ENCODE measurements at regions of chr5 and their contacts with region 1.

Region 1: DNA sequence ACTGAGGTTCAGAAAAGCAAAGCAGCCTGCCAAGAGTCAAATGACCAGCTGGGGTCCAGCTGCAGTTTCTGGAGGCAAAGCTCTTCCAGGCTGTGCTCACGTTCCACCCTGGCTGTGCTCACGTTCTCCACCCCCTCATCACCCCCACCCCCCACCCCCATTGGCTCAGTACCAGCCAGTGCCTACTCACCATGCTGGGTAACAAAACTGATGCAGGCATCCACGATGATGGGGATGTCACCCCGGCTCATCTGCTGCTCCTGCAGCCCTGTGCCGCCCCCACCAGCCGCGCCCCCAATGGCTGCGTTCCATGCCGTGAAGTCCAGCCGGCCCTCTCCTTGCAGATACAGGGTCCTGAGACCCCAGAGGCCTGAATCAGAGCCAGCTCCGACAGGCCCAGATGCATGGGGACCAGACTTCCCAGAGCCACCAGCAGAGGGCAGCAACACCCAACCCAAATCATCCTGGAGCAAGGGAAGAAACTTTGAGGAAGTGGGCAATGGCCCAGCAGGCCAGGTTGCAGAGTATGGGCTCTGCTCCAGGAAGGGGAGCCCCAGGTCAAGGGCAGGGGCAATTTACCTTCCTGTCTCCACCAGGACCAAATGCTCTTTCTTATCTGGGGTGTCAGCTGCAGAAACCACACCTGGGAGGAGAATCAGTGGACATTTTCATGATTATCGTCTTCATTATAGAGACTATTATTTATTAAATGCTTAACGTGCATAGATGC is 13.7 kb upstream of the FCHSD1 start:
- DNase-seq: peak; percentile 76 to 84
- H3K4me3 ChIP-seq: no peak overlapping the region
- H3K4me3 Mint-ChIP-seq: no peak overlapping the region
- H3K27ac Mint-ChIP-seq: no peak overlapping the region
- H3K4me1 ChIP-seq: no peaks in the 10 kb centered on the region
- H3K4me1 Mint-ChIP-seq: no peaks in the 10 kb centered on the region
- H3K27me3 ChIP-seq: no peaks in the 10 kb centered on the region
- H3K27me3 Mint-ChIP-seq: no peaks in the 10 kb centered on the region
- CTCF ChIP-seq: peak; percentile 85 to 94

Region 2: DNA sequence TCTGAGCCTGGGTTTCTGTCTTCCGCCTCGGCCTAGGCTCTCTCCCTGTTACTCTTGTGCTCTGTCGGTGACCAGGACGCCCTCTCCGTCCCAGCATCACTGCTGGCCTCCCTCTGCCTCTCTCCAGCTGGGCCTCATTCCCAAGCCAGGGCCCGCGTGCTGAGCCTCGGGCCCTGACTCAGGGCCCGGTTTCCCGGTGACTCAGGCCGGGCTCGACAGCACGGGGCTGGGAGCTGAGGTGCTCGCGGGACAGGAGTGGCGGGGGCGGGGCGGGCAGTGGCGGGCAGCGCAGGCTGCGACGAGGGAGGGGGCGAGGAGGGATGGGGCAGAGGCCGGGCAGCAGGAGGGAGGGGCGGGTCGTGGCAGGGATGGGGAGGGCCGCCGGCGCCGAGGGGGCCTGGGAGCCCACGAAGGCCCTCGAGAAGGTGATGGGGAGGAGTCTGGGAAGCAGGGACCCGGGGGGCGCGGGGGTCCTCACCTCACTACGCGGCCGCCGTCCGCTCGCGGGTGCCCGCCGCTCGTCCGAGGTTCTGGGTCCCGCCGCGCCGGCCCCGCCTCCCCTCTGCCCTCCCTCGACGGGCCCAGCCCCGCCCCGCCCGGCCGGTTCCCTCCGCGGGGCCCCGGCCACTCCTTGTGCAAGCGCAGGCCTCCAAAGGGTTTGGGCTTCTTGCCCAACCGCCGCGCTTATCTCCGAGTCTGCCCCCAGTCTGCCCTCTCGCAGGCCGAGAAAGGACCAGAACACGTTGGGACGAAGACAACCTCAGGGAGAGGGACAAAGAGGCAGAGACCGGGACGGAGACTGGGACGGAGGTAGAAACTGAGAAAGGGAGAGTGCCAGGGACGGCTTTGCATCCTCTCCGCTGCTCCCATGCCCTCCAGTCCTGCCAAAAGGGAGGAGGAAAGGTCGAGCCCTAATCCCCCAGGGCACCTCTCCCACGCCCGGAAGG is 17.1 kb after region 1 on chr5 and contains the start of gene ARAP3:
- CTCF ChIA-PET with region 1: interaction called, 6 read pairs
- POLR2A ChIA-PET with region 1: no interaction called
- intact Hi-C with region 1: loop called (anchors 1 kb)
- DNase-seq: peak; percentile 86
- H3K4me3 ChIP-seq: peak within 1 kb of the TSS; percentile 63
- H3K4me3 Mint-ChIP-seq: peak within 1 kb of the TSS; percentile 65
- H3K27ac Mint-ChIP-seq: peak within 1 kb of the TSS; percentile 12
- H3K4me1 ChIP-seq: peaks cover 15% of the 10 kb centered on the region
- H3K4me1 Mint-ChIP-seq: peaks cover 13% of the 10 kb centered on the region
- H3K27me3 ChIP-seq: no peaks in the 10 kb centered on the region
- H3K27me3 Mint-ChIP-seq: no peaks in the 10 kb centered on the region
- CTCF ChIP-seq: no peak
- total RNA-seq, gene ARAP3: 6.3 and 7.5 TPM in 2 replicates

Region 3: GRCh38 chr5:141691867-141692532 is 27.1 kb after region 1 on chr5:
- CTCF ChIA-PET with region 1: interaction called, 5 read pairs
- POLR2A ChIA-PET with region 1: no interaction called
- intact Hi-C with region 1: loop called (anchors 2 kb)
- DNase-seq: peak; percentile 81 to 92
- H3K4me3 ChIP-seq: peak overlapping the region; percentile 39
- H3K4me3 Mint-ChIP-seq: peak overlapping the region; percentile 71
- H3K27ac Mint-ChIP-seq: no peak overlapping the region
- H3K4me1 ChIP-seq: no peaks in the 10 kb centered on the region
- H3K4me1 Mint-ChIP-seq: no peaks in the 10 kb centered on the region
- H3K27me3 ChIP-seq: no peaks in the 10 kb centered on the region; the same call in 1 of the 2 replicates
- H3K27me3 Mint-ChIP-seq: peaks cover 7% of the 10 kb centered on the region
- CTCF ChIP-seq: peak; percentile 88 to 97